Activated CD4-positive, alpha-beta memory T cell treated with anti-CD3 and anti-CD28 coated beads for 36 hours (primary cell): ENCODE measurements at regions of chr20 and their contacts with region 1.

Region 1: DNA sequence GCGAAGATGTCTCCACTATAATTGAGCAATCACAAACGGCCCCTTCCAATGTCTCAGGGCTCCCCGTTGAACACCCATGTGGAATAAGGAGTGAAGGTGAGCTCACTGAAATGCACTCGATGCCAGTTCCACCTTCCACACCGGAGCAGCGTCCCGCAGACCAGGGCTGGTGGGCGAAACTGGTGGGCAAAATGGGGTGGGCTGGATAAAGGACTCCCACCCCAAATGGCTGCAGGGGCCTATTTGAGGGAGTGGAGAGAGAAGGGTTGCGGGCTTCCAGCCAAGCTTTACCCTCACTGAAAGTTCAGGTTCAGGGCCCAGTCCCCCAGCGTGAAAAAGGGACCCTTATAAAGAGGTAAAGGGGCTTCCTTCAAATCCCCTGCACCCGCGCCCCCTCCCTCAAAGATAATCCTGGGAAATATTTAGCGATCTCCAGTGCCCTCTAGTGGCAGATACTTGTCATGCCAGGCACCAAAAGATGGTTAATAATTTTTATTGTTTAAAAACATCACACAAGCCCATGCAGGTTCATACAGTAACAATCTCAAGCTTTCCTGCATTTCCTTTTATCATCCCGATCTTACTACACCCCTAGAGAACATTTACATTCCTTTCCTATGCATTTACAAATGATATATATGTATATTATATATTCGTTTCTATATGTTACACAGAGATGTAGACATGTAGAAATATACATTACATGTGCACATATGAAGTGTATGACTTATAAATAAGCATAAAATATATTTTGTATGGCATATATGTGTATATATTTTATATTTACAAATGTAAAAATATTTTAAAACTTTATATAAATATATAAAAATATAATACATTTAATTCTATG is 58.2 kb upstream of the NKX2-2 start:
- DNase-seq: peak; percentile 27
- H3K4me3 Mint-ChIP-seq: no peak overlapping the region
- H3K27ac Mint-ChIP-seq: no peak overlapping the region
- H3K4me1 Mint-ChIP-seq: peaks cover 11% of the 10 kb centered on the region
- H3K27me3 Mint-ChIP-seq: peaks cover 11% of the 10 kb centered on the region

Region 2: GRCh38 chr20:21520702-21521595 is 51.1 kb before region 1 on chr20:
- CTCF ChIA-PET with region 1: interaction called, 16 read pairs
- POLR2A ChIA-PET with region 1: no interaction called
- intact Hi-C with region 1: no loop called
- DNase-seq: no peak
- H3K4me3 Mint-ChIP-seq: peak overlapping the region; percentile 31
- H3K27ac Mint-ChIP-seq: peak overlapping the region; percentile 10
- H3K4me1 Mint-ChIP-seq: peaks cover 33% of the 10 kb centered on the region
- H3K27me3 Mint-ChIP-seq: peaks cover 84% of the 10 kb centered on the region

Region 3: GRCh38 chr20:21548390-21549035 is 23.6 kb before region 1 on chr20:
- CTCF ChIA-PET with region 1: interaction called, 28 read pairs
- POLR2A ChIA-PET with region 1: no interaction called
- intact Hi-C with region 1: loop called (anchors 1 kb)
- DNase-seq: peak; percentile 74
- H3K4me3 Mint-ChIP-seq: peak overlapping the region; percentile 24
- H3K27ac Mint-ChIP-seq: peak overlapping the region; percentile 71
- H3K4me1 Mint-ChIP-seq: peaks cover 38% of the 10 kb centered on the region
- H3K27me3 Mint-ChIP-seq: no peaks in the 10 kb centered on the region